ENCODE measurements at regions of chr3 and their contacts with region 1.

Region 1: GRCh38 chr3:160180581-160181216 is 44.5 kb upstream of the C3orf80 start:
- DNase-seq: peak; percentile 81
- H3K4me3 ChIP-seq: peak overlapping the region in 2 of 4 donors; percentile 7 to 10
- H3K27ac ChIP-seq: peak overlapping the region in 3 of 4 donors; percentile 74 to 80 (median 74)
- H3K4me1 ChIP-seq: peaks cover 0 to 49% (median 41%) of the 10 kb centered on the region in 4 donors
- H3K27me3 ChIP-seq: no peaks in the 10 kb centered on the region
- CTCF ChIP-seq: no peak
- EP300 ChIP-seq: peak; percentile 50 to 94 (median 90)
- POLR2A ChIP-seq: no peak

Region 2: GRCh38 chr3:159732172-159733111 is 448.3 kb before region 1 on chr3:
- intact Hi-C with region 1: no loop called
- DNase-seq: no peak
- H3K4me3 ChIP-seq: peak overlapping the region; percentile 13 to 42 (median 34)
- H3K27ac ChIP-seq: peak overlapping the region; percentile 58 to 78 (median 68)
- H3K4me1 ChIP-seq: peaks cover 0 to 38% (median 20%) of the 10 kb centered on the region in 4 donors
- H3K27me3 ChIP-seq: no peaks in the 10 kb centered on the region
- CTCF ChIP-seq: no peak
- EP300 ChIP-seq: no peak
- POLR2A ChIP-seq: no peak

Region 3: GRCh38 chr3:159839561-159840379 is 340.9 kb before region 1 on chr3:
- intact Hi-C with region 1: loop called (anchors 10 kb)
- DNase-seq: peak; percentile 76
- H3K4me3 ChIP-seq: peak within 1 kb of the TSS; percentile 41 to 49 (median 44)
- H3K27ac ChIP-seq: peak within 1 kb of the TSS; percentile 76 to 85 (median 82)
- H3K4me1 ChIP-seq: peaks cover 0 to 91% (median 77%) of the 10 kb centered on the region in 4 donors
- H3K27me3 ChIP-seq: no peaks in the 10 kb centered on the region
- CTCF ChIP-seq: no peak
- EP300 ChIP-seq: no peak
- POLR2A ChIP-seq: no peak

Region 4: GRCh38 chr3:160225176-160226025 is 44.7 kb after region 1 on chr3 and contains the start of gene C3orf80:
- intact Hi-C with region 1: loop called (anchors 2 kb)
- DNase-seq: peak; percentile 87
- H3K4me3 ChIP-seq: peak within 1 kb of the TSS; percentile 54 to 81 (median 79)
- H3K27ac ChIP-seq: peak within 1 kb of the TSS in 3 of 4 donors; percentile 82 to 85 (median 84)
- H3K4me1 ChIP-seq: peaks cover 0 to 52% (median 36%) of the 10 kb centered on the region in 4 donors
- H3K27me3 ChIP-seq: peaks cover 0 to 11% (median 0%) of the 10 kb centered on the region in 3 donors
- CTCF ChIP-seq: peak in 1 of 4 experiments; percentile 30
- EP300 ChIP-seq: no peak
- POLR2A ChIP-seq: peak in 1 of 2 donors; percentile 8
- total RNA-seq, gene C3orf80: 5.8 to 28.3 (median 23.4) TPM

Region 5: DNA sequence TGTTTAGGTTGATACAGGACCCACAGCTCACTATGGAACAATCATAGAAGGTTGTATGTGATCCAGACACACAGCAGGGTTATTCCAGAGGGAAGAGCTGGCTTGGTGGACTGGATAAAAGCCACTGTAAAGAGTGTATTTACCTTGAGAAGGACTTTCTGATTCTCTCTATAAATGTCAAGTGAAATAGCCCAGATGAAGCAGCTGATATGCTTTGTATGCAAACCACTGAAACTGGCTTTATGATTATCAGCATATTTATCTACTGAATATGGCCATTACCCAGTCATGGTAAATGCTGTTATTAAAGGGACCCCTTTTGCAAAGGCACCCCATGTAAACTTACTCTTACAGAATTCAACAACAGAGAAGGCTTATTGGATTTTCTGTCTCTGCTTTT is 72.6 kb after region 1 on chr3:
- intact Hi-C with region 1: loop called (anchors 5 kb)
- DNase-seq: no peak
- H3K4me3 ChIP-seq: no peak overlapping the region
- H3K27ac ChIP-seq: peak overlapping the region in 3 of 4 donors; percentile 65 to 70 (median 66)
- H3K4me1 ChIP-seq: peaks cover 0 to 46% (median 11%) of the 10 kb centered on the region in 4 donors
- H3K27me3 ChIP-seq: no peaks in the 10 kb centered on the region
- CTCF ChIP-seq: no peak
- EP300 ChIP-seq: peak in 1 of 4 donors; percentile 15
- POLR2A ChIP-seq: no peak

Measured in sigmoid colon (tissue), 7 donors.